ENCODE measurements at regions of chr10 and their contacts with region 1.

Region 1: GRCh38 chr10:7417103-7417623 is 6.3 kb upstream of the SFMBT2 start:
- DNase-seq: peak; percentile 66
- ATAC-seq: peak; percentile 24
- H3K4me3 ChIP-seq: no peak overlapping the region
- H3K4me3 Mint-ChIP-seq: no peak overlapping the region
- H3K27ac ChIP-seq: no peak overlapping the region
- H3K27ac Mint-ChIP-seq: no peak overlapping the region
- H3K4me1 ChIP-seq: peaks cover 5 to 9% of the 10 kb centered on the region in 2 donors
- H3K4me1 Mint-ChIP-seq: peaks cover 8% of the 10 kb centered on the region
- H3K27me3 ChIP-seq: peaks cover 0 to 9% (median 4%) of the 10 kb centered on the region in 4 experiments
- H3K27me3 Mint-ChIP-seq: peaks cover 5% of the 10 kb centered on the region
- CTCF ChIP-seq: peak; percentile 77

Region 2: GRCh38 chr10:6416892-6417512 is 1000.2 kb before region 1 on chr10:
- CTCF ChIA-PET with region 1: no interaction called
- POLR2A ChIA-PET with region 1: no interaction called
- intact Hi-C with region 1: loop called (anchors 5 kb)
- DNase-seq: peak; percentile 64
- ATAC-seq: peak; percentile 45
- H3K4me3 ChIP-seq: no peak overlapping the region
- H3K4me3 Mint-ChIP-seq: no peak overlapping the region
- H3K27ac ChIP-seq: no peak overlapping the region
- H3K27ac Mint-ChIP-seq: no peak overlapping the region
- H3K4me1 ChIP-seq: no peaks in the 10 kb centered on the region
- H3K4me1 Mint-ChIP-seq: no peaks in the 10 kb centered on the region
- H3K27me3 ChIP-seq: no peaks in the 10 kb centered on the region
- H3K27me3 Mint-ChIP-seq: peaks cover 13% of the 10 kb centered on the region
- CTCF ChIP-seq: peak; percentile 81

Region 3: DNA sequence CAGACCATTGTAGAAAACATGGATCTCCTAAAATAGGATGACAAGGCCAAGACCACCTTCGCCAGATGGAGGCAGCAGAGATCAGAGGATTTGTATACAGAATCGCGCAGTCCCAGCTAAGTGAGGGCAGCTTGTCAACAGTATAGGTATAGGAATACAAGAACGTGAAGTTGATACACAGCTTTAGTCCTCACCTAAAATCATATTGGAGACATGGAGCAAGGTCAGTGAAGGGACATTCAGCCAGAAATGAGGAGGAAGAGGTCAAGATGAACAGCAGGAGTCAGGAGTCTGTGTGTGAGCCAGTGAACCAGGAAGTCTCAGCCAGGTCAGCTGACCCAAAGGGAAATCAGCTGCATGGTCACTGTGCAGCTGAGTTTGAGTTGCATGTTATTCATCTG is 573.7 kb before region 1 on chr10:
- CTCF ChIA-PET with region 1: interaction called, 7 read pairs
- POLR2A ChIA-PET with region 1: no interaction called
- intact Hi-C with region 1: loop called (anchors 2 kb)
- DNase-seq: peak; percentile 15
- ATAC-seq: no peak
- H3K4me3 ChIP-seq: no peak overlapping the region
- H3K4me3 Mint-ChIP-seq: no peak overlapping the region
- H3K27ac ChIP-seq: no peak overlapping the region
- H3K27ac Mint-ChIP-seq: no peak overlapping the region
- H3K4me1 ChIP-seq: no peaks in the 10 kb centered on the region
- H3K4me1 Mint-ChIP-seq: no peaks in the 10 kb centered on the region
- H3K27me3 ChIP-seq: no peaks in the 10 kb centered on the region
- H3K27me3 Mint-ChIP-seq: peaks cover 23% of the 10 kb centered on the region
- CTCF ChIP-seq: no peak

Region 4: DNA sequence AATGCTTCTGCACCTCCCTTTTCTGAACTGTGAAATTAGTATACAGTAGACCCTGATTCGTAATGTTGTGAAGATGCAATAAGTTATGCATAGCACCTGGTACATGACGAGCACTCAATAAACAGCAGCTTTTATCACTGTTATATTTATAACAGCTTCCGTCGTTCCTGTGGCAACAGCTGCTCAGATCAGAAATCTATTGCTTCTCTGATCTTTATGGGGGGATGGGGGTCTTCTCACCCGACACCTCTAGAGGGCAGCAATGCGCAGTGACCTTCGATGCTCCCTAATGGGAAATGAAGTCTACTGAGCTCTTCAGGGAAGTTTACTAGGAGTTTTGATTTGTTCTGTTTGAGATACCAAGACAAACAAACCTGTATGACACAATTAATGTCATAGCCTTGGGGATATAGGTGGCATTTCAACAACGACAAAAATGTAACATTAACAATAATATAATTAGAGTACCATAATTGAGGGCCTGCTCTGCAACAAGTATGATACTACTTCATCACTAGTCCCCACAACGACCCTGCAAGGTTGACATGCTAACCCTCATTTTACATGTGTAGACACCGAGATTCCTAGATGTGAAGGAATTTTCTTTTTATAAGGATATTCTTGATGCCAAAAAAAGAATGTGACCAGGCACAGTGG is 295.9 kb before region 1 on chr10:
- CTCF ChIA-PET with region 1: interaction called, 55 read pairs
- POLR2A ChIA-PET with region 1: no interaction called
- intact Hi-C with region 1: loop called (anchors 1 kb)
- DNase-seq: peak; percentile 78
- ATAC-seq: peak; percentile 80
- H3K4me3 ChIP-seq: no peak overlapping the region
- H3K4me3 Mint-ChIP-seq: no peak overlapping the region
- H3K27ac ChIP-seq: no peak overlapping the region
- H3K27ac Mint-ChIP-seq: no peak overlapping the region
- H3K4me1 ChIP-seq: peaks cover 4 to 5% of the 10 kb centered on the region in 2 donors
- H3K4me1 Mint-ChIP-seq: peaks cover 5% of the 10 kb centered on the region
- H3K27me3 ChIP-seq: no peaks in the 10 kb centered on the region
- H3K27me3 Mint-ChIP-seq: peaks cover 11% of the 10 kb centered on the region
- CTCF ChIP-seq: peak; percentile 82

Region 5: GRCh38 chr10:8254350-8254749 is 837.2 kb after region 1 on chr10:
- CTCF ChIA-PET with region 1: no interaction called
- POLR2A ChIA-PET with region 1: no interaction called
- intact Hi-C with region 1: no loop called
- DNase-seq: no peak
- ATAC-seq: no peak
- H3K4me3 ChIP-seq: no peak overlapping the region
- H3K4me3 Mint-ChIP-seq: no peak overlapping the region
- H3K27ac ChIP-seq: no peak overlapping the region
- H3K27ac Mint-ChIP-seq: no peak overlapping the region
- H3K4me1 ChIP-seq: no peaks in the 10 kb centered on the region
- H3K4me1 Mint-ChIP-seq: no peaks in the 10 kb centered on the region
- H3K27me3 ChIP-seq: no peaks in the 10 kb centered on the region
- H3K27me3 Mint-ChIP-seq: no peaks in the 10 kb centered on the region
- CTCF ChIP-seq: no peak